Naive thymus-derived CD4-positive, alpha-beta T cell (primary cell): ENCODE measurements at regions of chr9 and their contacts with region 1.

Region 1: GRCh38 chr9:21802195-21803000 is at the start of gene MTAP:
- DNase-seq: peak in 7 of 9 donors; percentile 46 to 81 (median 72)
- ATAC-seq: peak; percentile 88
- H3K4me3 ChIP-seq: peak within 1 kb of the TSS; percentile 92
- H3K4me3 Mint-ChIP-seq: peak within 1 kb of the TSS; percentile 96 to 100 (median 99)
- H3K27ac ChIP-seq: peak within 1 kb of the TSS; percentile 69
- H3K27ac Mint-ChIP-seq: peak within 1 kb of the TSS; percentile 92 to 99 (median 96)
- H3K4me1 ChIP-seq: peaks cover 10 to 25% of the 10 kb centered on the region in 2 donors
- H3K4me1 Mint-ChIP-seq: peaks cover 24 to 52% (median 40%) of the 10 kb centered on the region in 7 donors
- H3K27me3 ChIP-seq: peaks cover 0 to 4% of the 10 kb centered on the region in 2 donors
- H3K27me3 Mint-ChIP-seq: peaks cover 0 to 46% (median 8%) of the 10 kb centered on the region in 5 donors
- total RNA-seq, gene MTAP: 29.0 to 50.7 (median 43.2) TPM

Region 2: DNA sequence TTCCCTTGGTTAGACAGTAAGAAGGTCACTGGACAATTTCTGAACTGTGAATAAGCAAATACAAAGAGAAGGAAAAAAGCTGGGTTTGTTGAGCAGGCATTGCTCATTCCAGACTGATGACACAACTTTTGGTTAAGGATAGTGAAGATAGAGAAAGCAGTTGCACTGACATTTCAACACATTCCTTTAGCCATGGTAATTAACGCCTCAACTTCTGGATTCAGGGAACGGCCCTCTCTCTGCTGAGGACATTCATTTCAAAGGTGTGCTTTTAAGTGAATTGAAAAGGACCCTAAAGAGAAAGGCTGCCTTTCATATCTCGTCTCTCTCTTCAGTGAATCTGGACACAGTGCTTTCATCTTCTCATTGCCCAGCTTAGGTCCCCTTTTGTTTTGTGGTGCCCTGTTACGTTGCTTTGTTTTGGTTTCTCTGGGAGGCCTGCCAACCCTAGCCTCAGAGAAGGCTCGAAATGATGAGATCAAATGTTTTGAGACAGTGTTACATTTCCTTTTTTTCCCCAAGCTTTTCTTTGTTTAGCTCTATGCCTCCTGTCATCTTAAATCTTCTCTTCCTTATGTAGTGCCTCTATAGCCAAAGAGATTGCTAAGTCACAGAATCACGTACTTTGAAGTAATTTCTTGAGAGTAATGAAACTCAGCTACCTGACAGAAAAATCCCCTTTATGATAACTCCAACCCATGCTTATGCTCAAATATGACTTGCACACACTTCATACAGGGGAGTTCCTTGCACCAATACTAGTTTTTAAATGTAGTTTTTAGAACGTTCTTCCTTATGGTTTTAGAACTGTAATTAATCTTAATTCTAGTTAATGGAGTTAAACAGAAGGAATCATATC is 225.8 kb before region 1 on chr9:
- CTCF ChIA-PET with region 1: interaction called, 4 read pairs
- POLR2A ChIA-PET with region 1: no interaction called
- intact Hi-C with region 1: loop called in 1 of 2 experiments (anchors 2 kb)
- DNase-seq: peak in 7 of 9 donors; percentile 44 to 80 (median 60)
- ATAC-seq: peak; percentile 69
- H3K4me3 ChIP-seq: no peak overlapping the region
- H3K4me3 Mint-ChIP-seq: peak overlapping the region; percentile 3 to 77 (median 58)
- H3K27ac ChIP-seq: peak overlapping the region; percentile 48
- H3K27ac Mint-ChIP-seq: peak overlapping the region; percentile 34 to 95 (median 87)
- H3K4me1 ChIP-seq: peaks cover 25 to 33% of the 10 kb centered on the region in 2 donors
- H3K4me1 Mint-ChIP-seq: peaks cover 23 to 51% (median 39%) of the 10 kb centered on the region in 7 donors
- H3K27me3 ChIP-seq: no peaks in the 10 kb centered on the region
- H3K27me3 Mint-ChIP-seq: peaks cover 0 to 34% (median 0%) of the 10 kb centered on the region in 5 donors